AG04449 (cell line): ENCODE measurements at regions of chr6 and their contacts with region 1.

Region 1: GRCh38 chr6:30914076-30914853 is at the start of gene VARS2:
- DNase-seq: no peak
- H3K4me3 ChIP-seq: peak within 1 kb of the TSS; percentile 60
- CTCF ChIP-seq: peak; percentile 52

Region 2: DNA sequence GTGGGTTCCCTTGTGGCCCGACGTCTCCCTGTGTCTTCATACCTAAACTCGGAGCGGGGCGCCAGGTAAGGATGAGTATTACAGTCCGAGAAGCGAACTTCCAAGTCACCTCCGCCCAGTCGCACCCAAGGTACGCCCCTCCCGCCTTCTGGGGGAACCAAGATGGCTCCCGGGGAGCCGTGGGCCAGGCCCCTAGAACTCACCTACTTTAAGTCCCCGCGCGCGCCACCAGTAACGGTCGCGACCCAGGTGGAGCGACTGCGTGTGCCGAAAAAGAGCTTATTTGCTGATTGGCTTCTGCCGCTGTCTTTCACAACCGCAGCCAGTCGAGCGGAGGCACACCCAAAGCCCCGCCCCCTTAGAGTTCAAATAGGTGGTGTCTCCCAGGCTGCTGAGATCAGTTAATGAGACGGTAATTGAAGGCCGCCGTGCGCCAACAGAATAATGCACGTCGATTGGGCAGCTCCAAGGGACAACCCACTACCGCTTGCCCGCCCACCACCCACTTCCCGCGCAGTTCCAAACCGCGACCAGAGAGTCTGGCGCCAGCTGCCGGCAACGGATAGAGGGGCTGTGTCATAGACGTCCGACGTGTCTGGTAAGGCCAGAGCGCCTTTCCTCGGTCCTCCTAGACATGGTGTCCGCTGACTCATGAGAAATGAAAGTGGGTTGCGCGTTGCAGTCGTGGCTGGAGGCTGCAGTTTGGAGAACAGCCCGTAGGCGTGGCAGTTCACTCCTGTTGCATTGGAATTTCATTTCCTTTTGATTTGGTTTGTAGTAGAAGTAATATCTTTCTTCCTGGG is 197.0 kb before region 1 on chr6 and contains the start of gene MDC1:
- CTCF ChIA-PET with region 1: interaction called, 12 read pairs
- POLR2A ChIA-PET with region 1: no interaction called
- DNase-seq: peak; percentile 100
- H3K4me3 ChIP-seq: peak within 1 kb of the TSS; percentile 71
- CTCF ChIP-seq: peak; percentile 31

Region 3: DNA sequence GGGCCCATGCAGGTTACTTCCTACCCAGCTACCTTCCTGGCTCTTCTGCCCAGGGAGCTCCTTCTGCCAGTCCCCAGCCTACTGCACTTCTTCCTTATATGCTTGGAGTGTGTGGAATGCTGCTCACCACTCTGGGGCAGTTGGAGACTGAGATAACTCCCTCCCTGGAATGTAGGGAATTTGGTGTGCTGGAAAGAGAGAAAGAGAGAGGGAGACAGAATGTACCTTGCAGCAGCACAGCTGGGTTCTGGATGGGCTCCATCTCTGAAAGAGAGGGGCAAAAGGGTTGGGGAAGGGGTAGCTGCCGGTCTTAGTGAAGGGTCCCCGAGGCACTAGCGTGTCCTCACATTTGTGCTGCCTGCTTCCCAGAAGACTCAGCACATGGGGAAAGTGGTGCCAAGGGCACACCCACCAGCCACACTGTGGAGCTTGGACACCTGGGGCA is 70.2 kb before region 1 on chr6:
- CTCF ChIA-PET with region 1: interaction called, 15 read pairs
- POLR2A ChIA-PET with region 1: no interaction called
- DNase-seq: no peak
- H3K4me3 ChIP-seq: no peak overlapping the region
- CTCF ChIP-seq: no peak

Region 4: GRCh38 chr6:30926644-30927043 is 12.4 kb after region 1 on chr6:
- CTCF ChIA-PET with region 1: interaction called, 48 read pairs
- POLR2A ChIA-PET with region 1: no interaction called
- DNase-seq: no peak
- H3K4me3 ChIP-seq: no peak overlapping the region
- CTCF ChIP-seq: no peak

Region 5: GRCh38 chr6:30981942-30982772 is 67.9 kb after region 1 on chr6:
- CTCF ChIA-PET with region 1: interaction called, 10 read pairs
- POLR2A ChIA-PET with region 1: no interaction called
- DNase-seq: peak; percentile 23
- H3K4me3 ChIP-seq: peak overlapping the region; percentile 49
- CTCF ChIP-seq: peak; percentile 44

Region 6: GRCh38 chr6:31079656-31080261 is 165.5 kb after region 1 on chr6:
- CTCF ChIA-PET with region 1: interaction called, 1,346 read pairs
- POLR2A ChIA-PET with region 1: interaction called, 11 read pairs
- DNase-seq: no peak
- H3K4me3 ChIP-seq: peak overlapping the region; percentile 13; the same call in 1 of the 2 replicates
- CTCF ChIP-seq: peak; percentile 68

Region 7: DNA sequence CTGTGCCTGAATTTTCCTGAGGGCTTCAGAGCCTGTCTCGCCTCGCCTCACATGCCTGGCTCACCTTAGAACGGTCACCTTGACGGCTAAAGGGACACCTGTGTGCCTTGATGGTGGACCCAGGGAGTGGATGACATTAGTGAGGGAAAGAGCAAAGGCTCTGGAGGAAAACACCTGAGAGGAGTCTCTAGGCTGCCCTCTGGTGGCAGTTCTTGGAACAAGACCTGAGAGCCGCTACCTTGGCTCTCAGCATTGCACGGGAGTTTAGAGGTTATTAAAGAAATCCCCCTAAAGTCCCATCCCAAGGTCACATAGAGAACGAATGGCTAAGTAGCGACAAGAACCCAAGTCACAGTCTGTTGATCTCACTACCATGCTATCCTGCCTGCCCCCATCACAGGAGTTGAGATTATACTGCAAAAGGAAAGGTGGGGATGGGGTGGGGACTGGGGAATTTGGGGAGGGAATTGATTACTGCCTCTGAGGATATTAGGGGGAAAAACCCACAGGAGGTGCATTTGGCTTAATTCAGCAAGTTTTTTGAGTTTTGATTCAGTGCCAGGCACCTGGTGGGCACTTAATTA is 213.9 kb after region 1 on chr6:
- CTCF ChIA-PET with region 1: interaction called, 12 read pairs
- POLR2A ChIA-PET with region 1: no interaction called
- DNase-seq: no peak
- H3K4me3 ChIP-seq: no peak overlapping the region
- CTCF ChIP-seq: peak; percentile 68